Activated T-helper 1 cell treated with anti-CD3 and anti-CD28 coated beads, Interleukin-12 subunit alpha, Interleukin-12 subunit beta, Interleukin-2, Interleukin-4 antibody, amounts not matched to agents 30 ng/mL and 10 ng/mL and 1 ng/mL, durations not matched to agents 14 hours and 24 hours and 36 hours (primary cell): ENCODE measurements at regions of chr2 and their contacts with region 1.

Region 1: GRCh38 chr2:238320246-238320647 is at the start of gene TRAF3IP1:
- DNase-seq: peak; percentile 84
- H3K4me3 Mint-ChIP-seq: peak within 1 kb of the TSS; percentile 81
- H3K27ac Mint-ChIP-seq: peak within 1 kb of the TSS; percentile 8
- H3K4me1 Mint-ChIP-seq: peaks cover 15% of the 10 kb centered on the region
- H3K27me3 Mint-ChIP-seq: peaks cover 21% of the 10 kb centered on the region
- total RNA-seq, gene TRAF3IP1: 14.4 and 15.4 TPM in 2 replicates

Region 2: GRCh38 chr2:238288650-238289573 is 31.3 kb before region 1 on chr2:
- intact Hi-C with region 1: loop called (anchors 1 kb)
- DNase-seq: peak; percentile 97
- H3K4me3 Mint-ChIP-seq: peak overlapping the region; percentile 91
- H3K27ac Mint-ChIP-seq: peak overlapping the region; percentile 97
- H3K4me1 Mint-ChIP-seq: peaks cover 38% of the 10 kb centered on the region
- H3K27me3 Mint-ChIP-seq: peaks cover 4% of the 10 kb centered on the region

Region 3: GRCh38 chr2:238438856-238439849 is 118.9 kb after region 1 on chr2:
- intact Hi-C with region 1: loop called (anchors 2 kb)
- DNase-seq: no peak
- H3K4me3 Mint-ChIP-seq: peak overlapping the region; percentile 9
- H3K27ac Mint-ChIP-seq: peak overlapping the region; percentile 71
- H3K4me1 Mint-ChIP-seq: peaks cover 46% of the 10 kb centered on the region
- H3K27me3 Mint-ChIP-seq: no peaks in the 10 kb centered on the region